H1 (cell line): ENCODE measurements at regions of chr1 and their contacts with region 1.

Region 1: GRCh38 chr1:3518256-3518655 is 63.8 kb downstream of the ARHGEF16 start:
- DNase-seq: peak in 1 of 2 experiments; percentile 87
- H3K4me3 ChIP-seq: no peak overlapping the region
- H3K27ac ChIP-seq: no peak overlapping the region
- H3K4me1 ChIP-seq: no peaks in the 10 kb centered on the region; a peak in 2 of 7 replicates
- H3K27me3 ChIP-seq: no peaks in the 10 kb centered on the region
- CTCF ChIP-seq: peak in 2 of 3 experiments; percentile 48 to 73; a peak in 2 of 4 replicates
- EP300 ChIP-seq: no peak
- POLR2A ChIP-seq: no peak
- RAD21 ChIP-seq: peak; percentile 39 to 50; a peak in 3 of 4 replicates

Region 2: DNA sequence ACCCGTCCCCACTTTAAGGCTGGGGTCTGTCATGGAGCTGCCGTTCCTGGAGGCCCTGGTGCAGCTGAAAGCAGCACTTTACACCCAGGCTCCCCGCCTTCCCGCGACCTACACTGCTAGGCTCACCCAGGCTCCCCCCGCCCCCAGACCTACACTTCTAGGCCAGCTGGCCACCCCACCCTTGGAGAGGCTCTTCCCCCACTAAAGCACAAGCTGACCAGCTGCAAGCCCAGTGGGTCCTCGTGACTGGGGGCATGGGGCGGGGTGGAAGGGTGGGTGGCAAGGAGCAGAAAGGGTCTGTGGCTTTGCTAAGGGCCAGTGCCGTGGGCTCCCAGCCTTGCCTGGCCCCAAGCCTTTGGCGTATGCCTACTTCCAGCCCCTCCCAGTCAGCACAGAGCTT is 73.5 kb before region 1 on chr1:
- CTCF ChIA-PET with region 1: no interaction called
- POLR2A ChIA-PET with region 1: no interaction called
- DNase-seq: no peak
- H3K4me3 ChIP-seq: no peak overlapping the region
- H3K27ac ChIP-seq: no peak overlapping the region
- H3K4me1 ChIP-seq: peaks cover 0 to 2% (median 0%) of the 10 kb centered on the region in 4 experiments; a peak in 2 of 7 replicates
- H3K27me3 ChIP-seq: no peaks in the 10 kb centered on the region; a peak in 1 of 7 replicates
- CTCF ChIP-seq: no peak
- EP300 ChIP-seq: no peak
- POLR2A ChIP-seq: no peak
- RAD21 ChIP-seq: no peak

Region 3: GRCh38 chr1:3501856-3502665 is 16.2 kb before region 1 on chr1:
- CTCF ChIA-PET with region 1: interaction called, 29 read pairs
- POLR2A ChIA-PET with region 1: no interaction called
- DNase-seq: peak; percentile 57 to 92
- H3K4me3 ChIP-seq: no peak overlapping the region
- H3K27ac ChIP-seq: no peak overlapping the region
- H3K4me1 ChIP-seq: no peaks in the 10 kb centered on the region
- H3K27me3 ChIP-seq: no peaks in the 10 kb centered on the region
- CTCF ChIP-seq: no peak
- EP300 ChIP-seq: no peak
- POLR2A ChIP-seq: no peak
- RAD21 ChIP-seq: no peak

Region 4: GRCh38 chr1:3530926-3531818 is 12.9 kb after region 1 on chr1:
- CTCF ChIA-PET with region 1: interaction called, 43 read pairs
- POLR2A ChIA-PET with region 1: interaction called, 3 read pairs
- DNase-seq: peak; percentile 34 to 83
- H3K4me3 ChIP-seq: peak overlapping the region; percentile 45 to 78 (median 62)
- H3K27ac ChIP-seq: no peak overlapping the region; the same call in 1 of the 2 replicates
- H3K4me1 ChIP-seq: peaks cover 0 to 13% (median 8%) of the 10 kb centered on the region in 4 experiments; a peak in 6 of 7 replicates
- H3K27me3 ChIP-seq: peaks cover 0 to 33% (median 29%) of the 10 kb centered on the region in 4 experiments; a peak in 6 of 7 replicates
- CTCF ChIP-seq: no peak
- EP300 ChIP-seq: no peak
- POLR2A ChIP-seq: peak in 1 of 2 experiments; percentile 59; a peak in 2 of 3 replicates
- RAD21 ChIP-seq: no peak

Region 5: GRCh38 chr1:3555131-3555920 is 37.1 kb after region 1 on chr1:
- CTCF ChIA-PET with region 1: interaction called, 13 read pairs
- POLR2A ChIA-PET with region 1: no interaction called
- DNase-seq: no peak
- H3K4me3 ChIP-seq: no peak overlapping the region
- H3K27ac ChIP-seq: no peak overlapping the region
- H3K4me1 ChIP-seq: no peaks in the 10 kb centered on the region
- H3K27me3 ChIP-seq: no peaks in the 10 kb centered on the region
- CTCF ChIP-seq: no peak
- EP300 ChIP-seq: no peak
- POLR2A ChIP-seq: no peak
- RAD21 ChIP-seq: no peak

Region 6: DNA sequence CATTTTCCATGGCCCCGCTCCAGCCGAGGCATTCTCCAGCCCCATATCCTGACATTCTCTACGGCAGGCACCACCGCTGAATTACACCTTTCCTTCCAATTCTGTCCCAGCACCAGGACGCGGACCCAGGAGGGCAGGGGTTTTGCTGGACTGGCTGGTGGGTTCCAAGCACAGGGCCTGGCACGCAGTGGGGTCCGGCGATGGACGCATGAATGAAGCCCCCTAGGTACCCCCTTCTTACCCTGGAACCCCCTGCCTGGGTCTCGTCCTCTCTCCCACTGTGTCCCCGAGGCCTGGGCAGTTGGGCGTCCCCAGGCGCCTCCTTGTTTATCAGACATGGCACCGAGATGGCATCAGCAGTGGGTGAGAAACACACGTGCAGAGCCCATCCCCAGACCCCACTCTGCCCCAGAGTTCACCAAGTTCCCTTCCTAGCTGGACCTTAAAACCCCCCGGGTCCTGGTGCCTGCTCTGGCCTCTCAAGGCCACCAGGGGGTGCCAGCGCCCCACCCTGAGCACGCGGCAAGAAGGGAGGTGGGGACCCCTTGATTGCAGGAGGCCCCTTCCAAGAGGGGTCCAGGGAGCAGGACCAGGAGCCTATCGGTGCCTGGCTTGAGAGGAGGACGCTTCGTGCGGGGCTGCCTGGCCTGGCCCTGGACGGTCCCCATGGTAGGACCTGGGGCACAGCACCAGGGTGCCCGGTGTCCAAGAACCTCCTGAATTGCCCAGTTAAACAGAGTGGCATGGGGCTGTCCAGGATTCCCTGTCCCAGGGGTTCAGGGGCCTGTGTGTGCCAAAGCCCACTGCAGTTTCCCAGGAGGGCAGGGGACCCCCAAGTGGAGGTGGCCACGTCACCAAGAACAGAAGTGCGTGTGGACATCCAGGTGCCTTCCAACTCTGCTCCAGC is 46.9 kb after region 1 on chr1:
- CTCF ChIA-PET with region 1: interaction called, 11 read pairs
- POLR2A ChIA-PET with region 1: no interaction called
- DNase-seq: peak; percentile 31 to 87
- H3K4me3 ChIP-seq: no peak overlapping the region
- H3K27ac ChIP-seq: no peak overlapping the region
- H3K4me1 ChIP-seq: no peaks in the 10 kb centered on the region
- H3K27me3 ChIP-seq: no peaks in the 10 kb centered on the region
- CTCF ChIP-seq: peak in 2 of 3 experiments; percentile 95 to 97; a peak in 3 of 4 replicates
- EP300 ChIP-seq: no peak
- POLR2A ChIP-seq: no peak
- RAD21 ChIP-seq: peak; percentile 97 to 98

Region 7: GRCh38 chr1:3649342-3650247 is 131.3 kb after region 1 on chr1 and contains the start of gene WRAP73:
- CTCF ChIA-PET with region 1: interaction called, 10 read pairs
- POLR2A ChIA-PET with region 1: no interaction called
- DNase-seq: peak; percentile 74 to 86
- H3K4me3 ChIP-seq: peak within 1 kb of the TSS; percentile 75 to 97 (median 86)
- H3K27ac ChIP-seq: no peak within 1 kb of the TSS
- H3K4me1 ChIP-seq: peaks cover 0 to 21% (median 3%) of the 10 kb centered on the region in 4 experiments; a peak in 5 of 7 replicates
- H3K27me3 ChIP-seq: peaks cover 42 to 48% (median 46%) of the 10 kb centered on the region in 4 experiments
- CTCF ChIP-seq: no peak
- EP300 ChIP-seq: no peak
- POLR2A ChIP-seq: no peak; a peak in 1 of 3 replicates
- RAD21 ChIP-seq: no peak
- total RNA-seq, gene WRAP73: 29.7 and 30.3 TPM in 2 replicates